PC-9 (cell line): ENCODE measurements at regions of chr1 and their contacts with region 1.

Region 1: DNA sequence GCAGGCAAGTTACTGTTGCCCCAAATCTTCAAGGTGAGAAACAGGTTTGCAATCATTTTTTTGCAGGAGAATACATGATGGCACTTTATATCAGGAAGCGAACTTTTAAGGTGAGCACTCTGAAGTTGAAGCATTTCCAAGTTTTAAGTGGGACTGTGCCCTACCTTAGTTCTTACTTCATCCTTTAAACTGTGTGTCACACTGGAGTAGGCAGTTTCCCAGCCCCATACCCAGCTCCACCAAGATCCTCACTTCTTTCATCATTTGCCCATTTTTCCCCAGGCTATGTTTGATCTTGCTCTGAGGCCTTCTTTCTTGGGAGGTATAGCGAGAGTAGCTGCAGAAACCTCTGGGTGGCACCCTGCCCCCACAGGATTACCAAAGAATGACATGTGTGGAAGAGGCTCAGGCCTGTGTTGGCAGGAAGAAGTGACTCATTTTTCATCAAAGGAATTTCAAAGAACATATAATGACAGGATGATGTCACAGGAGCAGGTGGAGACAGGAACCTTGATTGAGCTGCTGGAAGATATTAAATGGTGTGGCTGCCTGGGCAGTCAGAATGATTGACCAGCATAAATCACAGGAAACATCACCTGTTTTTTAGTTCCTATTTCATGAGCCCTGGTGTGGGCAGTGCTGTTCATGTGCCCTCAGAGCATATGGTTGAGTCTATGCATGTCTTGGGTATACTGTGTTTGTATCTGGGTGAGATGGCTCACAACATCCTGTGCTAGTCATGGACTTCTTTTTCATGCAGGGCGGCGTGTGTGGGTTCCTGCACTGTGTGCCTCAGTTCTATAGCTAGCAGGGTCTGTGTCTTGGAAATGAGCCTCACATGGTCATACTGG is 20.8 kb upstream of the MACF1 start:
- DNase-seq: peak; percentile 92 to 99
- H3K4me3 ChIP-seq: no peak overlapping the region; the same call in 1 of the 2 replicates
- H3K27ac ChIP-seq: peak overlapping the region; percentile 91
- H3K4me1 ChIP-seq: peaks cover 63% of the 10 kb centered on the region
- H3K27me3 ChIP-seq: no peaks in the 10 kb centered on the region
- CTCF ChIP-seq: peak; percentile 65

Region 2: GRCh38 chr1:39105061-39105840 is 78.5 kb before region 1 on chr1:
- CTCF ChIA-PET with region 1: interaction called, 3 read pairs
- POLR2A ChIA-PET with region 1: interaction called, 5 read pairs
- intact Hi-C with region 1: loop called (anchors 1 kb)
- DNase-seq: peak in 1 of 2 experiments; percentile 81
- H3K4me3 ChIP-seq: peak overlapping the region; percentile 95
- H3K27ac ChIP-seq: peak overlapping the region; percentile 74
- H3K4me1 ChIP-seq: peaks cover 57% of the 10 kb centered on the region
- H3K27me3 ChIP-seq: no peaks in the 10 kb centered on the region
- CTCF ChIP-seq: no peak

Region 3: GRCh38 chr1:39132505-39133339 is 51.0 kb before region 1 on chr1:
- CTCF ChIA-PET with region 1: no interaction called
- POLR2A ChIA-PET with region 1: interaction called, 8 read pairs
- intact Hi-C with region 1: loop called (anchors 5 kb)
- DNase-seq: peak; percentile 94 to 95
- H3K4me3 ChIP-seq: no peak overlapping the region
- H3K27ac ChIP-seq: peak overlapping the region; percentile 77
- H3K4me1 ChIP-seq: peaks cover 70% of the 10 kb centered on the region
- H3K27me3 ChIP-seq: no peaks in the 10 kb centered on the region
- CTCF ChIP-seq: peak; percentile 67

Region 4: GRCh38 chr1:39158327-39159086 is 25.2 kb before region 1 on chr1:
- CTCF ChIA-PET with region 1: interaction called, 3 read pairs
- POLR2A ChIA-PET with region 1: interaction called, 3 read pairs
- intact Hi-C with region 1: loop called (anchors 2 kb)
- DNase-seq: peak; percentile 42 to 58
- H3K4me3 ChIP-seq: no peak overlapping the region
- H3K27ac ChIP-seq: peak overlapping the region; percentile 59
- H3K4me1 ChIP-seq: peaks cover 67% of the 10 kb centered on the region
- H3K27me3 ChIP-seq: no peaks in the 10 kb centered on the region
- CTCF ChIP-seq: no peak

Region 5: GRCh38 chr1:39317910-39318633 is 134.3 kb after region 1 on chr1:
- CTCF ChIA-PET with region 1: no interaction called
- POLR2A ChIA-PET with region 1: no interaction called
- intact Hi-C with region 1: no loop called
- DNase-seq: no peak
- H3K4me3 ChIP-seq: no peak overlapping the region
- H3K27ac ChIP-seq: no peak overlapping the region
- H3K4me1 ChIP-seq: no peaks in the 10 kb centered on the region
- H3K27me3 ChIP-seq: no peaks in the 10 kb centered on the region
- CTCF ChIP-seq: no peak

Region 6: GRCh38 chr1:39398278-39399021 is 214.7 kb after region 1 on chr1:
- CTCF ChIA-PET with region 1: no interaction called
- POLR2A ChIA-PET with region 1: no interaction called
- intact Hi-C with region 1: loop called (anchors 1 kb)
- DNase-seq: peak; percentile 91 to 100
- H3K4me3 ChIP-seq: peak overlapping the region; percentile 22; the same call in 1 of the 2 replicates
- H3K27ac ChIP-seq: peak overlapping the region; percentile 91
- H3K4me1 ChIP-seq: peaks cover 66% of the 10 kb centered on the region
- H3K27me3 ChIP-seq: no peaks in the 10 kb centered on the region
- CTCF ChIP-seq: no peak

Region 7: DNA sequence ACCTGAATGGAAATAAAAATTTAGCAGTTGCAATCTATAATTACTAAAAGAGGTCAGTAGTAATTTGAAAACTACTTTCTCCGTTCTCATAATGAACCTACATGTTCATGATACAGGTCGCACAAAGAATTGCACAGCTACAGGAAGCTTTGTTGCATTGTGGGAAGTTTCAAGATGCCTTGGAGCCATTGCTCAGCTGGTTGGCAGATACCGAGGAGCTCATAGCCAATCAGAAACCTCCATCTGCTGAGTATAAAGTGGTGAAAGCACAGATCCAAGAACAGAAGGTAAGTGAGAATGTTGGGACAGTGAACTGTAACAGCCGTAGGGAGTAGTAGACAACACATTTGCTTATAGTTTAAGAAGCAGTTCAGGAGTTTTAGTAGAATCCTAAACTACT is 238.9 kb after region 1 on chr1:
- CTCF ChIA-PET with region 1: no interaction called
- POLR2A ChIA-PET with region 1: no interaction called
- intact Hi-C with region 1: no loop called
- DNase-seq: no peak
- H3K4me3 ChIP-seq: no peak overlapping the region
- H3K27ac ChIP-seq: no peak overlapping the region
- H3K4me1 ChIP-seq: no peaks in the 10 kb centered on the region
- H3K27me3 ChIP-seq: no peaks in the 10 kb centered on the region
- CTCF ChIP-seq: no peak

Region 8: GRCh38 chr1:39462074-39462473 is 278.3 kb after region 1 on chr1:
- CTCF ChIA-PET with region 1: no interaction called
- POLR2A ChIA-PET with region 1: no interaction called
- intact Hi-C with region 1: no loop called
- DNase-seq: no peak
- H3K4me3 ChIP-seq: no peak overlapping the region
- H3K27ac ChIP-seq: no peak overlapping the region
- H3K4me1 ChIP-seq: no peaks in the 10 kb centered on the region
- H3K27me3 ChIP-seq: no peaks in the 10 kb centered on the region
- CTCF ChIP-seq: no peak

Region 9: GRCh38 chr1:39538588-39539465 is 355.1 kb after region 1 on chr1:
- CTCF ChIA-PET with region 1: no interaction called
- POLR2A ChIA-PET with region 1: no interaction called
- intact Hi-C with region 1: no loop called
- DNase-seq: peak in 1 of 2 experiments; percentile 60
- H3K4me3 ChIP-seq: no peak overlapping the region
- H3K27ac ChIP-seq: no peak overlapping the region
- H3K4me1 ChIP-seq: no peaks in the 10 kb centered on the region
- H3K27me3 ChIP-seq: no peaks in the 10 kb centered on the region
- CTCF ChIP-seq: peak; percentile 86